Endothelial cell of umbilical vein (primary cell): ENCODE measurements at regions of chrX and their contacts with region 1.

Region 1: DNA sequence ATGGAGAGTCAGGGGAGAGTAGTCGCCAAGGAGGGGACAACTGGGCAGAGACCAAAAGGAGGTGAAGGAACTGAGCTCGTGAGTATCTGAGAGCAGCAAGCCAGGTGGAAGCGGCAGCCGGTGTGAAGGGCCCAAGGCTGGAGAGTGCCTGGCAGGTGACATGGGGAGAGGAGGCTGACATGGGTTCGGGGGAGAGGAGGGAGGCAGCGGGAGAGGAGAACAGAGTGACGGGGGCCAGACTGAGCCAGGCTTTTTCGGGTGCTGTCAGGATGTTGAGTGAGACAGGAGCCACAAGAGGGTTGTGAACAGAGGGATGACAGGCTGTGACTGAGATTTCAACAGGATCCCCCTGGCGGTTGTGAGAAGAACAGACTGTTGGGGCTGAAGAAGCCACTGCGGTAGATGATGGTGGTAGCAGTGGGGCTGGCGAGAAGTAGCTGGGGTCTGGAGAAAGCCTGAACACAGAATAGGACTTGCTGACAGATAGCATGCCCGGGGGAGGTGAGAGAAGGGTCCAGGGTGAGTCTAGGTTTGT is 5.7 kb downstream of the ELK1 start:
- DNase-seq: no peak
- H3K4me3 ChIP-seq: no peak overlapping the region
- H3K27ac ChIP-seq: no peak overlapping the region
- H3K4me1 ChIP-seq: peaks cover 9% of the 10 kb centered on the region
- H3K27me3 ChIP-seq: no peaks in the 10 kb centered on the region
- CTCF ChIP-seq: peak; percentile 21 to 42
- POLR2A ChIP-seq: no peak

Region 2: GRCh38 chrX:47497273-47497672 is 147.4 kb before region 1 on chrX:
- CTCF ChIA-PET with region 1: interaction called, 12 read pairs
- POLR2A ChIA-PET with region 1: no interaction called
- dilution Hi-C with region 1: no loop called
- intact Hi-C with region 1: loop called (anchors 5 kb)
- DNase-seq: peak; percentile 13
- H3K4me3 ChIP-seq: no peak overlapping the region
- H3K27ac ChIP-seq: no peak overlapping the region
- H3K4me1 ChIP-seq: no peaks in the 10 kb centered on the region
- H3K27me3 ChIP-seq: peaks cover 0 to 2% of the 10 kb centered on the region in 2 experiments
- CTCF ChIP-seq: peak in 1 of 2 donors; percentile 11
- POLR2A ChIP-seq: no peak

Region 3: DNA sequence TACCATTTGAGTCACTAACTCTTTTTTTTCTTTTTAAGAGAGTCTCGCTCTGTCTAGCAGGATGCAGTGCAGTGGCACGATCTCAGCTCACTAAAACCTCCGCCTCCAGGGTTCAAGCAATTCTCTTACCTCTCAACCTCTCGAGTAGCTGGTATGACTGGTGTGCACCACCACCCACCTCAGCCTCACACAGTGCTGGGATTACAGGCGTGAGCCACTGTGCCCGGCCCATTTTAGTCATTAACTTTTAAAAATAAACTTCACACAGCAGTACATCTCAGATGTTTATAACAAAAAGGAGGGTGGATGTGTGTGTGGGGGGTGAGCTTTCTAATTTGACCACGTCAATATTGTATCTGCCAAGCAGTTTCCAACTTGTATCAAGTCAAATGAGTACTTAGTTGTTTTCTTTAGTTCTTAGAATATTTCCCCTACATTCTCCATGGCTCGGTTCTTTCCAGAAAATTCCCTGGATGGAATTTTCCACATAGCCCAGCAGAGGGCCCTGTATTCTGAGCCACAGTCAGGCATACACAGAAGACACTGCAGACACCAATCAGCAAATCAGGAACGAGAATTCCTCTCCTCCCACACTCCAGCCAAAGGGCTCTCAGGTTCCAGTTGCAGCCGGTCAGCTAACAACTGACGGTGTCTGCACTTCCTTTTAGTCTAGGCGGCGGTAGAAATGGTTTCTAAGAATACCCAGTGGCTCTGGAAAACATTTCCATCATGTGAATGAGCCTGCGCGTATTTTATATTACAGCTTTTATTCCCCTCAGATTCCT is 103.7 kb before region 1 on chrX:
- CTCF ChIA-PET with region 1: interaction called, 13 read pairs
- POLR2A ChIA-PET with region 1: no interaction called
- dilution Hi-C with region 1: no loop called
- intact Hi-C with region 1: loop called (anchors 1 kb)
- DNase-seq: peak; percentile 92
- H3K4me3 ChIP-seq: peak overlapping the region in 1 of 3 experiments; percentile 32
- H3K27ac ChIP-seq: peak overlapping the region; percentile 37
- H3K4me1 ChIP-seq: peaks cover 4% of the 10 kb centered on the region
- H3K27me3 ChIP-seq: no peaks in the 10 kb centered on the region
- CTCF ChIP-seq: peak; percentile 47 to 54
- POLR2A ChIP-seq: no peak

Region 4: DNA sequence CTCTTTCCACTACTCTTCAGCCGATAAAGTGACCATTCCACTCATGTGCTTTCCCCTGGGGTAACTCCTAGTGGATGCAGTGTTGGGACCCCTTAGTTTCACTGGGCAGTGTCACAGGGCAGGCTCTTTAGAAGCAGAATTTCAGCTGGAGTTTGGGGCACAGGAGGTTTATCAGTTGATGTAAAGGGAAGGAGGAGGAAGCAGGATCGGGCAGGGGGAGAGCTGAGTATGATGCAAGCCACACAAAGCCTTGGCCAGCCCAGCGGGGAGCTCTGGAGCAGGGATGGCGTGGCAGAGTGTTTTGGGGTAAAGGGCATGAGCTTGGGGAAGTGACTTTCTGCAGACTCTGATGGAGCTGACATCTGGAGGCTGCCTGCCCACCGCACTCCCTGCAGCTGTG is 972.0 kb after region 1 on chrX:
- CTCF ChIA-PET with region 1: no interaction called
- POLR2A ChIA-PET with region 1: no interaction called
- dilution Hi-C with region 1: no loop called
- intact Hi-C with region 1: no loop called
- DNase-seq: no peak
- H3K4me3 ChIP-seq: no peak overlapping the region
- H3K27ac ChIP-seq: no peak overlapping the region
- H3K4me1 ChIP-seq: no peaks in the 10 kb centered on the region
- H3K27me3 ChIP-seq: no peaks in the 10 kb centered on the region
- CTCF ChIP-seq: no peak
- POLR2A ChIP-seq: no peak